KBM-7 (cell line): ENCODE measurements at regions of chr11 and their contacts with region 1.

Region 1: GRCh38 chr11:107898270-107898669 is 30.0 kb upstream of the RAB39A start:
- DNase-seq: peak; percentile 47

Region 2: GRCh38 chr11:107565219-107565937 is 332.9 kb before region 1 on chr11 and contains the start of gene ALKBH8:
- in situ Hi-C with region 1: loop called (anchors 25 kb)
- DNase-seq: peak; percentile 82

Region 3: GRCh38 chr11:108115500-108116140 is 217.3 kb after region 1 on chr11:
- in situ Hi-C with region 1: no loop called
- DNase-seq: no peak